ENCODE measurements at regions of chr5 and their contacts with region 1.

Region 1: GRCh38 chr5:96601811-96602244 is 60.3 kb upstream of the CAST start:
- DNase-seq: peak; percentile 31 to 77 (median 67)
- H3K4me3 ChIP-seq: no peak overlapping the region
- H3K27ac ChIP-seq: no peak overlapping the region
- H3K4me1 ChIP-seq: peaks cover 0 to 5% of the 10 kb centered on the region in 2 donors
- H3K27me3 ChIP-seq: no peaks in the 10 kb centered on the region
- CTCF ChIP-seq: peak; percentile 63 to 85 (median 76)
- POLR2A ChIP-seq: no peak

Region 2: GRCh38 chr5:95858661-95859326 is 743.0 kb before region 1 on chr5:
- intact Hi-C with region 1: loop called in 1 of 2 experiments (anchors 10 kb)
- DNase-seq: peak; percentile 90 to 96 (median 94)
- H3K4me3 ChIP-seq: peak overlapping the region in 1 of 4 donors; percentile 48
- H3K27ac ChIP-seq: peak overlapping the region; percentile 27 to 97 (median 83)
- H3K4me1 ChIP-seq: peaks cover 15 to 53% of the 10 kb centered on the region in 2 donors
- H3K27me3 ChIP-seq: no peaks in the 10 kb centered on the region
- CTCF ChIP-seq: peak; percentile 99 to 100 (median 99)
- POLR2A ChIP-seq: peak; percentile 16 to 44

Region 3: DNA sequence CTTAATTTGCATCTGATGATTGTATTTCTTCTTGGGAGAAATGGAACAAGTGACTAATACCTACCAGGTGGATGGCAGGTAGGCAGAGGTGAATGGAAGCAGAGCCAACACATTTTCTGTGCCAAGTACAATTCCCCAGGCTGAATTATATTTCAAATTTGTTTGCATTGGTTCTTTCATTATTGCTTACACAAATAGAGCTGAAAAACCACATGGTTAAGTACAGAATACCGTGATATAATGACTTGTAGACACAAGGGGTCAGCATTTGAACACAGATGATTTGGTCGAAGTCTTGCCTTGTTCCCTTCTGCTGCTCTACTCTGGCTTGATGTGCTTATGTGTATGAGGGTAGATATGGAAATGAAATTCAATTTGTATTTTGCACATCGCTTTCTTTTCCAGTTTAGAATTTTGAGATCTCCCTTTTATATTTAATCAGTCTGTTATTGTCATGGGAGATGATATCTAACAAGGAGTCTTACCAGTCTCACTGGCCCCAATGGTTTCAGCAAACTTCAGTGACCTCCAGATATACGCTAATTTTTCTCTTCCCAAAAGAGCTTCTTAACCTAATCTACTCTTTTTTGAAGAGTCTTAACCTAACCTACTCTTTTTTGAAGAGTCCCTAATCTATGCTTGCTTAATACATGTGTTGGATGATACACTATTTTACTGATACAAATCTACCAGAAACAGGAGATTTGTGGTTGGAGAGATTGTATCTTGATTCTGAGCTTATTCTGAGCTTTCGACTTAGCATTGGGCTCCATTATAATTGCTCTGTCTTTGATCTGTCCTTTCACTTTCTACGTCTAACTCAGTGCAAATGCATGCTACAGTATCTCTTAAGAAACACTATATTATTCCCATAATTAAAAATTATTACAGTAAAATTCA is 256.9 kb before region 1 on chr5:
- intact Hi-C with region 1: loop called (anchors 5 kb)
- DNase-seq: peak in 5 of 7 donors; percentile 25 to 56 (median 30)
- H3K4me3 ChIP-seq: no peak overlapping the region
- H3K27ac ChIP-seq: no peak overlapping the region
- H3K4me1 ChIP-seq: peaks cover 0 to 1% of the 10 kb centered on the region in 2 donors
- H3K27me3 ChIP-seq: no peaks in the 10 kb centered on the region
- CTCF ChIP-seq: peak; percentile 27 to 79 (median 73)
- POLR2A ChIP-seq: no peak